PC-9 (cell line): ENCODE measurements at regions of chr5 and their contacts with region 1.

Region 1: DNA sequence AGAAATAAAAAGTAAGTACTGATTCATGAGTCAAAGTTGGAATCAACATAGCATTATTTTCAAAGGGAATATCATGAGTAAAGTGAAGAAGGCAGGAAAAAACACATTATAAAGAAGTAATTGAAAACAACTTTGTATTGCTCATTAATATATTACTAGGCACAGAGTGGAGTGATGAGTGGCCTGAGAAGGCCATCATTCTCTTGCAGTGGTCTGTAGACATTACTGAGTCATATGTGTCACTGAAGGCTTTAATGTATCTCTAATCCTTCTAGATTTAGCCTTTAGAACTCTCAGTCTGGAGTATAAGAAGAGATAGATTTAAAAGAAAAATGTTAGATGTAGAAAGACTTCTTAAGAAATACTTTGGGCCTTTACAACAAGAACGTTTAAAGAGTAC is 881.4 kb downstream of the DNAH5 start:
- DNase-seq: no peak
- H3K4me3 ChIP-seq: no peak overlapping the region
- H3K27ac ChIP-seq: no peak overlapping the region
- H3K4me1 ChIP-seq: no peaks in the 10 kb centered on the region
- H3K27me3 ChIP-seq: no peaks in the 10 kb centered on the region
- CTCF ChIP-seq: no peak

Region 2: GRCh38 chr5:11692636-11693035 is 1370.5 kb before region 1 on chr5:
- CTCF ChIA-PET with region 1: no interaction called
- POLR2A ChIA-PET with region 1: no interaction called
- intact Hi-C with region 1: loop called (anchors 5 kb)
- DNase-seq: no peak
- H3K4me3 ChIP-seq: no peak overlapping the region
- H3K27ac ChIP-seq: no peak overlapping the region
- H3K4me1 ChIP-seq: no peaks in the 10 kb centered on the region
- H3K27me3 ChIP-seq: peaks cover 14% of the 10 kb centered on the region
- CTCF ChIP-seq: no peak

Region 3: GRCh38 chr5:13108265-13108664 is 45.2 kb after region 1 on chr5:
- CTCF ChIA-PET with region 1: no interaction called
- POLR2A ChIA-PET with region 1: no interaction called
- intact Hi-C with region 1: no loop called
- DNase-seq: no peak
- H3K4me3 ChIP-seq: no peak overlapping the region
- H3K27ac ChIP-seq: no peak overlapping the region
- H3K4me1 ChIP-seq: no peaks in the 10 kb centered on the region
- H3K27me3 ChIP-seq: no peaks in the 10 kb centered on the region
- CTCF ChIP-seq: no peak

Region 4: DNA sequence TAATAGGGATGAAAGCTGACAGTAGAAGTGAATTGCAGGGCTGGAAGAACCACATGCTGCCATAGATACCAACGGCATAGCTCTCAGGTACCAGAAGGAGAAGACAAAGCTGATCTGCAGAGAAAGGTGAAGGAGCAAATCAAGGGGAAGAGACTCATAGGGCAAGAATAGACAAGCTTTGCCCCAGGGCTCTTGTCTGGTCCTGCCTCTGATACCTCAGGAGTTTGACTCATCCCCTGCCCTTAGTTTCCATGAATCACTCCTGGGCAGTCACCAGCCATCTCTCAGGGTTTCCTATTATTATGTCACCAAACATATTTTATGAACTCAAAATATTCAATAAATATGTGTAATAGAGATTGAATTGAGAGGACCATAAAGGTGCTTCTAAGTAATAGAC is 80.5 kb after region 1 on chr5:
- CTCF ChIA-PET with region 1: no interaction called
- POLR2A ChIA-PET with region 1: no interaction called
- intact Hi-C with region 1: no loop called
- DNase-seq: no peak
- H3K4me3 ChIP-seq: no peak overlapping the region
- H3K27ac ChIP-seq: no peak overlapping the region
- H3K4me1 ChIP-seq: no peaks in the 10 kb centered on the region
- H3K27me3 ChIP-seq: no peaks in the 10 kb centered on the region
- CTCF ChIP-seq: no peak